ENCODE measurements at regions of chr3 and their contacts with region 1.

Region 1: GRCh38 chr3:38346587-38347410 is at the start of gene XYLB:
- DNase-seq: peak; percentile 95
- H3K4me3 ChIP-seq: peak within 1 kb of the TSS; percentile 82 to 86
- H3K27ac ChIP-seq: peak within 1 kb of the TSS in 1 of 2 experiments; percentile 43; a peak in 1 of 4 replicates
- H3K4me1 ChIP-seq: peaks cover 0 to 12% of the 10 kb centered on the region in 2 experiments; a peak in 1 of 4 replicates
- H3K27me3 ChIP-seq: no peaks in the 10 kb centered on the region
- CTCF ChIP-seq: peak; percentile 69
- EP300 ChIP-seq: no peak
- RAD21 ChIP-seq: peak; percentile 66
- polyA plus RNA-seq, gene XYLB: 2.7 and 3.6 TPM in 2 replicates

Region 2: DNA sequence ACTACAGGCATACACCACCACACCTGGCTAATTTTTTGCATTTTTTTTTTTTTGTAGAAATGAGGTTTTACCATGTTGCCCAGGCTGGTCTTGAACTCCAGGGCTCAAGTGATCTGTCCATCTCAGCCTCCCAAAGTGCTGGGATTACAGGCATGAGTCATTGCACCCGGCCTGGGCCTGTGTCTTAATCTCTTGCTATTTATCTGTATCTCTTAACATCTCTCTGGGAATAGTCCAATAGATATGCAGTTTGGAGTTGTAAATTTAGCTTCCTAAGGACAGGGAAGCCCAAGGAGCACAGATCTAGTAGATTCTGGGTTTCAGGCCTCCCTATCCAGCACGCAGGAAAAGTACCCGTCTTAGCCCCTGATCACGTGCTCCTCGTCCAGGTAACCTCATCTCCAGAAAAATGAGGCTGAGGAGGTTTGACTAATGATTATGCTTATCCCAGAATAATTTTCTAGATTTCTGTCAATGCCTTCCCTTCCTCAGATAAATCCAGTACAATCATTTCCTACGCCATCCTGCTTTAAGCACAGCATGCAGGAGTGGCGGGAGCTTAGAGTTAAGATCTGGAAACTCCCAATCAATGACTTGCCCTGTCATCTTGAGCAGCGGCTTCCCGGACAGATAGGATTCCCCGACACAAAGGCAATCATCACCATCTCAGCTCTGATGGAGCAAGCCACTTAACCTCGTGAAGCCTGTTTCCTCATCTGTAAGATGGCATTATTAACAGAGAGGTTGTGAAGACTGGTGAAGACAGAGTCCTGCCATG is 497.5 kb before region 1 on chr3:
- CTCF ChIA-PET with region 1: no interaction called
- POLR2A ChIA-PET with region 1: no interaction called
- DNase-seq: no peak
- H3K4me3 ChIP-seq: no peak overlapping the region
- H3K27ac ChIP-seq: no peak overlapping the region
- H3K4me1 ChIP-seq: no peaks in the 10 kb centered on the region; a peak in 1 of 4 replicates
- H3K27me3 ChIP-seq: no peaks in the 10 kb centered on the region
- CTCF ChIP-seq: no peak
- EP300 ChIP-seq: no peak
- RAD21 ChIP-seq: no peak

Region 3: GRCh38 chr3:38314112-38314763 is 32.6 kb before region 1 on chr3:
- CTCF ChIA-PET with region 1: interaction called, 15 read pairs
- POLR2A ChIA-PET with region 1: no interaction called
- DNase-seq: peak; percentile 77
- H3K4me3 ChIP-seq: no peak overlapping the region
- H3K27ac ChIP-seq: peak overlapping the region in 1 of 2 experiments; percentile 34; a peak in 1 of 4 replicates
- H3K4me1 ChIP-seq: peaks cover 0 to 22% of the 10 kb centered on the region in 2 experiments; a peak in 1 of 4 replicates
- H3K27me3 ChIP-seq: no peaks in the 10 kb centered on the region; the same call in 1 of the 2 replicates
- CTCF ChIP-seq: no peak
- EP300 ChIP-seq: no peak
- RAD21 ChIP-seq: no peak

Region 4: DNA sequence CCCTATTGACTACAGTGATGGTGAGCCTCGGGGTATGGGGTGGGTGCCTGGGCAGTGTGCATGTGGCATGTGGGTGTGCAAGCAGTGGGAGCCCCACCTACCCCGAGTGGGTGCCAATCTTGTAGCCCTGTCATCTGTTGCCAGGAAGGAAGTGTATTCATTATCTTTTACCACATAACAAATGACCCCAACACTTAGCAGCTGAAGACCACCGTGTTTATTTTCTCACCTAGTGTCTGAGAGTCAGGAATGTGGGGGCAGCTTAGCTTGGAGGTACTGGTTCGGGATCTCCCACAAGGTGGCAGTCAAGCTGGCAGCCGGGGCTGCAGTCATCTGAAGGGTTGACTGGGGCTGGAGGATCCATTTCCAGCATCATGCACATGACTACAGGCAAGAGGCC is 21.4 kb after region 1 on chr3:
- CTCF ChIA-PET with region 1: interaction called, 12 read pairs
- POLR2A ChIA-PET with region 1: no interaction called
- DNase-seq: no peak
- H3K4me3 ChIP-seq: no peak overlapping the region
- H3K27ac ChIP-seq: no peak overlapping the region
- H3K4me1 ChIP-seq: no peaks in the 10 kb centered on the region
- H3K27me3 ChIP-seq: no peaks in the 10 kb centered on the region
- CTCF ChIP-seq: no peak
- EP300 ChIP-seq: no peak
- RAD21 ChIP-seq: no peak

Region 5: GRCh38 chr3:38479431-38480092 is 132.8 kb after region 1 on chr3:
- CTCF ChIA-PET with region 1: interaction called, 146 read pairs
- POLR2A ChIA-PET with region 1: no interaction called
- DNase-seq: peak; percentile 87
- H3K4me3 ChIP-seq: no peak overlapping the region
- H3K27ac ChIP-seq: no peak overlapping the region
- H3K4me1 ChIP-seq: peaks cover 0 to 20% of the 10 kb centered on the region in 2 experiments; a peak in 1 of 4 replicates
- H3K27me3 ChIP-seq: no peaks in the 10 kb centered on the region
- CTCF ChIP-seq: peak; percentile 95
- EP300 ChIP-seq: no peak
- RAD21 ChIP-seq: peak; percentile 96